ENCODE measurements at regions of chr2 and their contacts with region 1.

Region 1: GRCh38 chr2:9753276-9753600 is 90.0 kb upstream of the TAF1B start:
- DNase-seq: peak; percentile 87
- ATAC-seq: peak; percentile 84
- H3K4me3 Mint-ChIP-seq: peak overlapping the region; percentile 66
- H3K27ac Mint-ChIP-seq: peak overlapping the region; percentile 91
- H3K4me1 Mint-ChIP-seq: peaks cover 69% of the 10 kb centered on the region
- H3K27me3 Mint-ChIP-seq: peaks cover 33% of the 10 kb centered on the region

Region 2: DNA sequence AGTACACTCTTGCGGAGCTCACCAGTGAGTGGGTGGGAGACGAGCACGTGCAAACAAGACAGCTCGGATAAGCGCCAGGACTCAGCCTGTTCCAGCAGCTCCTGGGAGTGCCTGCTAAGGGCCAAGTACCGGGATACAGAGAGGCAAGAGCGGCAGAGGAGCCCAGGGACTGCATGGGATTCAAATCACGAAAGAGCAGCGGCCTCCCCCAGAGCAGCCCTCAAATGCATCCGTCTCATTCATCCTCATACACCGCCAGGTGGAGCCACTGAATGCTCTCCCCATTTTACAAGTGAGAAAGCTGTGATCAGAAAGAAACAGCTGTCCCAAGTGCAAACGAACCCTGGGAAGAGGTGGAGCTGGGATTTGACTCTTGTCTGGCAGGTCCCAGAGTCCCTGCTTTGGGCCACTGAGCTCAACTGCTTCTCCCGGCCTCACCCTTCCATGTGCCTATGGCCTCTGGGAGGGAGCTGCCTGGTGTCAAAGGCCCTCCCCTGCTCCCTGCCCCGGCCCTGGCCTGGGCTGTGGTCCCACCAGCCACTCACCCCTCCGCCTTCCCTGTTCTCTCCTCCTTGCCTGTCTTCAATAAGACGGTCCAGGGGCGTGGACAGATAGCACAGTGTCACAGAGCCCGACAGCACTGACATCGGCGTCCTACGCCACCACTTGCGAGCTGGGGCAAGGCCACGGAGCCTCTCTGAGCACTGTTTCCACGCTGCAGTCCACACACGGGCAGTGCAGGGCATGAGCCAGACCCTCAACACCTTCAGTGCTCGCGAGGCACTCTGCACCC is 17.3 kb after region 1 on chr2:
- CTCF ChIA-PET with region 1: interaction called, 29 read pairs
- DNase-seq: peak; percentile 78
- ATAC-seq: peak; percentile 78
- H3K4me3 Mint-ChIP-seq: no peak overlapping the region
- H3K27ac Mint-ChIP-seq: peak overlapping the region; percentile 15
- H3K4me1 Mint-ChIP-seq: peaks cover 18% of the 10 kb centered on the region
- H3K27me3 Mint-ChIP-seq: no peaks in the 10 kb centered on the region

Region 3: GRCh38 chr2:9813312-9814133 is 60.3 kb after region 1 on chr2:
- CTCF ChIA-PET with region 1: no interaction called
- DNase-seq: peak; percentile 82
- ATAC-seq: peak; percentile 97
- H3K4me3 Mint-ChIP-seq: no peak overlapping the region
- H3K27ac Mint-ChIP-seq: peak overlapping the region; percentile 71
- H3K4me1 Mint-ChIP-seq: peaks cover 20% of the 10 kb centered on the region
- H3K27me3 Mint-ChIP-seq: peaks cover 7% of the 10 kb centered on the region